Activated CD8-positive, alpha-beta memory T cell treated with anti-CD3 and anti-CD28 coated beads, Interleukin-2, amount 10 ng/mL, durations not matched to agents 7 days and 5 days (primary cell): ENCODE measurements at regions of chr2 and their contacts with region 1.

Region 1: GRCh38 chr2:39913648-39914461 is 134.8 kb upstream of the THUMPD2 start:
- DNase-seq: no peak
- ATAC-seq: peak; percentile 65
- H3K4me3 Mint-ChIP-seq: no peak overlapping the region
- H3K27ac Mint-ChIP-seq: peak overlapping the region; percentile 21
- H3K4me1 Mint-ChIP-seq: peaks cover 21% of the 10 kb centered on the region
- H3K27me3 Mint-ChIP-seq: peaks cover 17% of the 10 kb centered on the region

Region 2: DNA sequence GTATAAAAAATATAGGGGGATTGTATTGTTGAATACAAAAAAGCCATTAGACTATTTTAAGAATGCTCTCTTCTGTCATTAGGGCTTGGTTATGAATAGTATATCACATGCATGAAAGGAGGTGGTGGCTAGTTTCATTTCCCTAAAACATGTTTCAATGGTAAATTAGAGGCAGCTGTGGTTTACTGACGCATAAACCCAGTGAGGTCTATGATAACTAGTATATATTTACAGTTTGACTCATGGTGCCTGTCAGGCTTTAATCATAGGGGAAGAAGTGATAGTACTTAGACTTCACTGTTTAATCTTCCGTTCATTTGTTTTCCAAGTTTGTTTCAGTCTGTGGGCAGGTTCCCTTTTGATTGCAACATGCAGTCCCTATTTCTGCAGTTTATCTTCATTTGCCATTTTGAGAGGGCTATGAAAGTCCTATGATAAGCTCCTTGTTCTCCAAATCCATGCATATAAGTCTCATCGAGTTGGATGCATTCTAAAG is 421.7 kb before region 1 on chr2:
- CTCF ChIA-PET with region 1: no interaction called
- DNase-seq: peak; percentile 71
- ATAC-seq: peak; percentile 96
- H3K4me3 Mint-ChIP-seq: peak overlapping the region; percentile 39
- H3K27ac Mint-ChIP-seq: peak overlapping the region; percentile 83
- H3K4me1 Mint-ChIP-seq: peaks cover 37% of the 10 kb centered on the region
- H3K27me3 Mint-ChIP-seq: peaks cover 26% of the 10 kb centered on the region

Region 3: DNA sequence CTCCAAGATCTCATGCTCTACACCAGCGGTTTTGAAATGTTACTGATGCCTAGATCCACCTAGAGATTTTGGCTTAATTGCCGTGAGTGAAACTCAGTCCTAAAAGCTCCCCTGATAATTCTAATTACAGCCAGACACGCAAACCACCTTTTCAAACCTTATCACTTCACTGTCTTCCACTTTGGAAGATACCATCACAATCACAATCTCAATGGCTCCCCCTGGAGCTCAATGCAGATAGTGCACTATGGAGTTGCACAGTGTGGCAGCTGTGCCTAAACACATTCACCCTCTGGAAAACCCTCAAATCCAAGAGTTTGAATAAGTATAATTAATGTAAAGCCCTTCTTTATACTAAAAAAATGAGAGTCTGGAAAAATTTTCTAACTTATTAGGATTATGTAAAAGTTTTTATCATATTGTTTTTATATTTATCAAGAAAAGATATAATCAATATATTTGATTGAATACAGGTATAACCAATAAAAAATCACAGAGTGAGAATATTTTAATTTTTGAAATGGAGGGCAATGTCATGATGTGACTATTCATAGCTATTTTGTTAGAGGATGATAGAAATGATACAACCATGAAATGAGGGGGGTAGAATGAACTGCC is 640.9 kb after region 1 on chr2:
- CTCF ChIA-PET with region 1: interaction called, 26 read pairs
- DNase-seq: peak; percentile 60
- ATAC-seq: peak; percentile 55
- H3K4me3 Mint-ChIP-seq: no peak overlapping the region
- H3K27ac Mint-ChIP-seq: no peak overlapping the region
- H3K4me1 Mint-ChIP-seq: no peaks in the 10 kb centered on the region
- H3K27me3 Mint-ChIP-seq: no peaks in the 10 kb centered on the region